ENCODE measurements at regions of chr20 and their contacts with region 1.

Region 1: DNA sequence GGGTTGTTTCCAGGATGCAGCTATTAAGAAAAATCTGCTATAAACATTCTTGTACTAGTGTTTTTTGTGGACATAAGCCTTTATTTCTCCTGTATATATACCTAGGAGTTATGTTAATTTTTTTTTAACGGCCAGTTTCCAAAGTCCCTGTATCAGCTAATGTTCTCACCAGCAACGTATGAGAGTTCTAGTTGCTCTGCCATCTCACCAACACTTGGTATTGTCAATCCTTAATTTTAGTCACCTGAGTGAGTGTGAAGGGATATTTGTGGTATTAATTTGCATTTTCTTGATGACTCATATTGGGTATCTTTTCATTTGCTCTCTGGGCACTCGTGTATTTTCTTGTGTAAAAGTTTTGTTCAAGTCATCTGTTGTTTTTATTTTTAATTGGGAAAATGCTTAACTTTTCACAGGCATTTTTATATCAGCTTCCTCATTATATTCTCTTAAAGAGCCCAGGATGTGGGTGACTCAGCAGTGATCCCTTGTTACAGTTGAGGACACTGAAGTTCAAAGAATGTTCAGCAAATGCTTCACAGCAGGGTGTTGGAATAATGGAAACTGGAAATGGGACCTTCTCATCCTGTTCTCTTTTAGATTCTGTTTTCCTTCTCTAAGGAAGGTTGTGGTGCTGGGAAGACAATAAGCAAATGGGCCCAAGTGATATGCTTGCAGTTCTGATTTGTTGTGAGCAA is 211.7 kb upstream of the PRND start:
- DNase-seq: no peak
- ATAC-seq: no peak
- H3K4me3 ChIP-seq: no peak overlapping the region
- H3K4me1 ChIP-seq: no peaks in the 10 kb centered on the region
- CTCF ChIP-seq: no peak

Region 2: DNA sequence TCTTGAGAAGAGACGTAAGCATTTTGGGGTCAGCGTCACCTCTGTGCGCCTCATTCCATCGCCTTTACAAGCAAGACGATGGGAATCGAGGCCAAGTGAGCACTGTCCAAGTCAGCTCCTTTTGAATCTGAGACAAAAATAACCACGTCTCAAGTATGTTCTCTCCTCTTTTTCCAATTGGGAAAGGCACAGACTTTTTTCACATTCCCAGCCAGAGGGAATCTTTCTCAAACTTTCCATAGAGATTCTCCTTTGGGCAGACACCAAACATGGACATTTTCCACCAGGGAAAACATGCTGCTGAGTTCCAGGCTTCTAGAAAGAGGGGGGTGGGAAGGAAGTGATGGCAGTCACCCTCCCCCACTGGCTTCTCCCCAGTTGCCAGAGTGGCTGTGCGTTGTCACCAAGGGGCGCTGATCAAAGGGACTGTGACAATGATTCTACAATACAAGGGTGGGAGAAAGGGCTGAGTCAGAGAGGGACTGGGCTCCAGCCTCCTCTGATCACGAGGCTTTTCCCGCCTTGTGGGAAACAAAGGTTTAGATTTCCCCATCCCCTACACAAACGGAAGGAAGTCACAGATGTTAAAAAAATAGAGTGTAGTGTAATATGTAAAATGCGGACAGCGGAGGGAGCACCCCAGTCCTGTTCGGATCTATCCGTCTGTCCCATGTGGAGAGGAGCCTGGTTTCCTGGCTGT is 212.7 kb before region 1 on chr20:
- intact Hi-C with region 1: no loop called
- DNase-seq: peak in 1 of 3 donors; percentile 5
- ATAC-seq: no peak
- H3K4me3 ChIP-seq: no peak overlapping the region
- H3K4me1 ChIP-seq: no peaks in the 10 kb centered on the region
- CTCF ChIP-seq: no peak

Region 3: GRCh38 chr20:4457566-4458543 is 52.1 kb before region 1 on chr20:
- intact Hi-C with region 1: loop called in 1 of 2 experiments (anchors 2 kb)
- DNase-seq: no peak
- ATAC-seq: no peak
- H3K4me3 ChIP-seq: no peak overlapping the region
- H3K4me1 ChIP-seq: no peaks in the 10 kb centered on the region
- CTCF ChIP-seq: no peak